Right ventricle myocardium inferior (tissue), 1 donor: ENCODE measurements at regions of chr5 and their contacts with region 1.

Region 1: DNA sequence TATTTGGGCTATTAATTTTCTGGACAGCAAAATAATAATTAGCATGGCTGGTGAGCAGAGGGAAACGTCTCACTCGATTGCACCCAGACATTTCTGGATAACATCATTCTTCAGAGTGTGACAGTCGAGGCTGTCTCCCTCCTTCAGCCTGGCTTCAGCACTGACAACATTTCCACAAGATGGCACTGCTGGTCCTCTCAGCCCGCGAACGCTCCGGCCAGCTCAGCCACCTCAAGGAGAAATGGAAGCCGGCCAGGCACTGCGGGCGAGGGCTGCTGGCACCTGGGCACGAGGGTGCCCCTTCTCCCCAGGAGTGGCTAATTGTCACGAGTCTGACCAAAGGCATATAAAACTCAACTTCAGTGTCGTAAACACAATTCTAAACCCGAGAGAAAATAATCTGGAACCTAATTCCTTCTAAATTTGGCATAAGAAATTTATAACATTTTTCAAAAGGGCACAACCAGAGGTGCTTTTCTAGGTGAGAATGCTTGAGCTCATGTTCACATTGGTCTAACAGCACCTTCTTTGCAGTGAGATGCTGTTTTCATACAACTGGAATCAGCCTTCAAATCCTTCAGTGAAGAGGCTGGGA is 65.9 kb downstream of the DAP start:
- DNase-seq: peak; percentile 86
- ATAC-seq: peak; percentile 85

Region 2: DNA sequence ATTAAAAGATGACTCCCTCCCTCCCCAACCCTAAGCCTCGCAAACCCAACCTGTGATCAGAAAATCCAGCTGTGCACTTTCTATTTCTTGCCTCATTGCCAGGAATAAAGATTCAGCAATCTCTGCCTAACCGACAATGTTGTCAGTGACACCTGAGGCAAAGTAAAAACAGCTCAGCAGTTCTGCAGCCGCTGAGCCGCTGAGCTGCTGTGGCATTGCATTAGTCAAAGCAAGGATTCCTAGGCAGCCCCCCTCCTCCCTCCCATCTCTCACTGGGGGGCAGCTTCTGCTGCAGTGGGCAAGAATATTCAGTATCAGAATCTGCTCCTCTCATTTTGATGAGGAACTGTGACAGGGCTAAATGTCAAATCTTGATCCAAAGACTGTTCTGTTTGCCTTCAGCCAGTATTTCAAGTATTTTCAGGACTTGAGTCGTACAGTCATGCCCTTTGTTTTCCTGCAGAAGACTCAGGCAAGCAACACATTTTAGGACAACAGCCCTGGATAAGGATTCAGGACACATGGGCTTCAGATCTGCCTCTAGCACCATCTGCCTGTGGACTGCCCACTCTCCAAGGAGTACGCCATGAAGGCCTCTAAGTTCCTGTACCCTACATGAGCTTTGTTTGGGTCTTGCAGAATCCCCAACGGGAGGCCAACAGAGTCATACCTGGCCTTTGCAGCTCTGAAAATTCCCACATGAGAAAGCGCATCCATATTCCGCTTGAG is 106.9 kb after region 1 on chr5:
- intact Hi-C with region 1: loop called (anchors 2 kb)
- DNase-seq: no peak
- ATAC-seq: peak; percentile 57

Region 3: GRCh38 chr5:10856683-10857337 is 161.7 kb after region 1 on chr5:
- intact Hi-C with region 1: loop called (anchors 5 kb)
- DNase-seq: no peak
- ATAC-seq: no peak

Region 4: GRCh38 chr5:11110128-11110527 is 415.0 kb after region 1 on chr5:
- intact Hi-C with region 1: loop called (anchors 2 kb)
- DNase-seq: no peak
- ATAC-seq: no peak

Region 5: GRCh38 chr5:11182441-11183268 is 487.5 kb after region 1 on chr5:
- intact Hi-C with region 1: loop called (anchors 2 kb)
- DNase-seq: no peak
- ATAC-seq: no peak

Region 6: DNA sequence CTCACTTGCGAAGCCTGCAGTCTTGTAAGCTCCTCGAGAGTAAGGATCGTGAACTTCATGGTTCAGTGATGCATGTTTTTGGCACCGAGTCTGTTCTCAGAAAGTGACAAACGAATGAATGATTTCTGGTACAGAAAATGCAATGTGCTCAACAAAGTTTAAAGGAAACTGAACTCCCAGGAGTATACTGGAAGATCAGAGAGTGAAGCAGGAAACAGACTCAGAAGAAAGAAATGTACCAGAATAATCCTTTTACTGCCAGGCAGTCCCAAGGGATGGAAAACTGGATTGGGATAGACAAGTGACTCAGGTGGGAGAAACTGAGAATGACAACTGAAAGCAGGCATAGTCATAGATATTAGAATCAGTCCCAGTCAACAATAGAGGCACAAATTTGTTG is 788.5 kb after region 1 on chr5:
- intact Hi-C with region 1: loop called (anchors 10 kb)
- DNase-seq: no peak
- ATAC-seq: no peak